ENCODE measurements at regions of chr3 and their contacts with region 1.

Region 1: GRCh38 chr3:157532529-157533297 is 29.5 kb upstream of the VEPH1 start:
- DNase-seq: peak; percentile 89
- H3K4me3 Mint-ChIP-seq: no peak overlapping the region
- H3K27ac Mint-ChIP-seq: no peak overlapping the region
- H3K4me1 Mint-ChIP-seq: no peaks in the 10 kb centered on the region
- H3K27me3 Mint-ChIP-seq: no peaks in the 10 kb centered on the region
- CTCF ChIP-seq: peak; percentile 66

Region 2: DNA sequence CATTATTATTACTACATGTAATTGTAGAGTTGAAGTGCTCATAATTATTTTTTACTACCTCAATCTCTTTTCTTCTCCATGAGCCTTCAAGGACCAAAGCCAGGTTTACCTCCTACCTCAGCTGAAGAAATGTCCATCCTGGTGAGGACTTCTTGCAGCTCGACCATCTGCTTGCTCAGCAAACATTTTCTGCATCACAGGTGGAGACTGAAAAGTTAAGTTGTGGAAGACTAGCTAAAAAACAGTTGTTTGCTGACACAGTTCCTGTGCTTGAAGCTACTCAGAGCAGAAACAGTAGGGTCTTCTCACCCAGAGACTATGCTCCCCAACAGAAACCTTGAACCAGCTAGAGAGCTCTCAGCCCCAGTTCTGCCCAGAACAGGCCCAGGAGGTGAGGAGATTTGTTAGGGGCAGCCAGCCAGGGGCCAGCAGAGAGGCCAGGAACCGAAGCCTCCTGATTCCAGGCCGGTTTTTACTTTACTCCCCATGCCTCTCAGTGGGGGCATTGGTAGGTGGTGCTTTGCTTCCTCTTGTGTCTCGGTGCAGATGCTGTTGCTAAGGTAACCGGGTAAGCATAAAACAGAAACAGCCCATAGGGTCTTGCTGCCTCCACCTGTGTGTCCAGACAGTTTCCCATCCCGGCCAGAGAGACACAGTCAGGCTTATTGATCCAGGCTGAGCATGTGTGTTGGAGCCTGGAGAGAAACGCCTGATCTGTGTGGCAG is 427.6 kb before region 1 on chr3:
- CTCF ChIA-PET with region 1: no interaction called
- POLR2A ChIA-PET with region 1: no interaction called
- intact Hi-C with region 1: no loop called
- DNase-seq: no peak
- H3K4me3 Mint-ChIP-seq: no peak overlapping the region
- H3K27ac Mint-ChIP-seq: peak overlapping the region; percentile 10
- H3K4me1 Mint-ChIP-seq: peaks cover 18% of the 10 kb centered on the region
- H3K27me3 Mint-ChIP-seq: no peaks in the 10 kb centered on the region
- CTCF ChIP-seq: no peak

Region 3: GRCh38 chr3:157201648-157202278 is 330.9 kb before region 1 on chr3:
- CTCF ChIA-PET with region 1: interaction called, 10 read pairs
- POLR2A ChIA-PET with region 1: no interaction called
- intact Hi-C with region 1: no loop called
- DNase-seq: peak; percentile 52
- H3K4me3 Mint-ChIP-seq: no peak overlapping the region
- H3K27ac Mint-ChIP-seq: no peak overlapping the region
- H3K4me1 Mint-ChIP-seq: no peaks in the 10 kb centered on the region
- H3K27me3 Mint-ChIP-seq: no peaks in the 10 kb centered on the region
- CTCF ChIP-seq: peak; percentile 45

Region 4: DNA sequence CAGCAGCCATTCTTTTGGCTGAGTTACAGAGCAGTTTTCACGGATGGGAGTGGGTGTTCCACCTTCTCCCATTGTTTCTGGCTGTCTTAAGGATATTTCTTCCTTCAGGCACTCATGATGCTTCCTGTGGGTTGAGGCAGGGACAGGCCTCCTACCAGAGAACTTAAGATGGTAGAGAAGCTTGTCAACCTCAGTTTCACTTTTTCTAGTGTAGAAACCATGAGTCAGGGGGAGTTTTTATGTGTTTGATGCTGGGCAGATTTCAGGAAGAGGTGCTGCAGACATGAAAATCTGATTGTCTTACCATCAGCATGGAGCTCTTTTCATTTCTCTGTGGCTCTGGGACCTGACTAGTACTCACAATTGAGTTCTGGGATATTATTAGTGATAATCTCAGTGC is 19.2 kb after region 1 on chr3:
- CTCF ChIA-PET with region 1: interaction called, 20 read pairs
- POLR2A ChIA-PET with region 1: interaction called, 3 read pairs
- intact Hi-C with region 1: no loop called
- DNase-seq: no peak
- H3K4me3 Mint-ChIP-seq: no peak overlapping the region
- H3K27ac Mint-ChIP-seq: no peak overlapping the region
- H3K4me1 Mint-ChIP-seq: no peaks in the 10 kb centered on the region
- H3K27me3 Mint-ChIP-seq: peaks cover 31% of the 10 kb centered on the region
- CTCF ChIP-seq: no peak

Region 5: GRCh38 chr3:157618075-157618760 is 85.5 kb after region 1 on chr3:
- CTCF ChIA-PET with region 1: interaction called, 11 read pairs
- POLR2A ChIA-PET with region 1: no interaction called
- intact Hi-C with region 1: no loop called
- DNase-seq: peak; percentile 74
- H3K4me3 Mint-ChIP-seq: no peak overlapping the region
- H3K27ac Mint-ChIP-seq: no peak overlapping the region
- H3K4me1 Mint-ChIP-seq: no peaks in the 10 kb centered on the region
- H3K27me3 Mint-ChIP-seq: no peaks in the 10 kb centered on the region
- CTCF ChIP-seq: peak; percentile 41

Region 6: GRCh38 chr3:158532099-158532734 is 999.5 kb after region 1 on chr3:
- CTCF ChIA-PET with region 1: interaction called, 49 read pairs
- POLR2A ChIA-PET with region 1: no interaction called
- intact Hi-C with region 1: loop called (anchors 1 kb)
- DNase-seq: peak; percentile 77
- H3K4me3 Mint-ChIP-seq: no peak overlapping the region
- H3K27ac Mint-ChIP-seq: no peak overlapping the region
- H3K4me1 Mint-ChIP-seq: peaks cover 7% of the 10 kb centered on the region
- H3K27me3 Mint-ChIP-seq: no peaks in the 10 kb centered on the region
- CTCF ChIP-seq: peak; percentile 64

Region 7: DNA sequence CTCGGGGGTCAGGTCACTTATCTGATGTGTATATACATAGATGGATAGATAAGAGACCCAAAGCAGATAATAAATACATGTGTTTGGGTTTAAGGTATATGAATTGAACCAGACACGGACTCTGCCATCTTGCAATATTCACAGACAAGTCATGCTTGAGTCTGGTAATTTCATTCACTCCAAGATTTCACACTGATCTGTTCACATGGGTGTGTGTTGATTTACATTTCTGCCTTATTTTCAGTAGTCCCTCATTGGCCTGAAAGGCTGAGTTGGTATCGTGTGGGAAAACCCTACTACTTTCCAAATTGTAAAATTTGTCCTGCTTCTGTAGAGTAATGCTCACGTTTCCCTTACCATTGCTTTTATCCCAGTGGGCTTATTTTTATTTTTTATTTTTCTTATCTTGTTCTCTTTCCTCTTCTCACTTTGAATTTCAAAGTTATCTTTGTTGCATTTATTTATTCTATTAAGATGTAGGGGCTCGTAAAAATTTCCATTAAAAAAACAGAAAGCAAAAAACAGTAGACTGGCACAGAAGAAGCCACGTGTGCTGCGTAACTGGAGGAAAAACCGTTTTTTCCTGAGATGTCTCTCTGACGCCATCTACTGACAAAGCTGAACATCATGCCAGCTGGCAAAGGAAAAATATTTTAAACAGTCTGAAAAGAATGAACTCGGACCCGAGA is 1258.3 kb after region 1 on chr3:
- CTCF ChIA-PET with region 1: no interaction called
- POLR2A ChIA-PET with region 1: no interaction called
- intact Hi-C with region 1: loop called (anchors 5 kb)
- DNase-seq: peak; percentile 71
- H3K4me3 Mint-ChIP-seq: peak overlapping the region; percentile 63
- H3K27ac Mint-ChIP-seq: no peak overlapping the region
- H3K4me1 Mint-ChIP-seq: peaks cover 20% of the 10 kb centered on the region
- H3K27me3 Mint-ChIP-seq: no peaks in the 10 kb centered on the region
- CTCF ChIP-seq: peak; percentile 79

Measured in MCF 10A (cell line).